BJ (cell line): ENCODE measurements at regions of chr6 and their contacts with region 1.

Region 1: GRCh38 chr6:116531675-116532570 is 13.6 kb downstream of the TRAPPC3L start:
- DNase-seq: no peak
- H3K4me3 ChIP-seq: no peak overlapping the region
- H3K27me3 ChIP-seq: no peaks in the 10 kb centered on the region
- CTCF ChIP-seq: peak; percentile 76

Region 2: GRCh38 chr6:116279260-116280063 is 252.5 kb before region 1 on chr6 and contains the start of gene TSPYL1:
- CTCF ChIA-PET with region 1: interaction called, 19 read pairs
- POLR2A ChIA-PET with region 1: no interaction called
- DNase-seq: peak; percentile 85
- H3K4me3 ChIP-seq: peak within 1 kb of the TSS; percentile 86
- H3K27me3 ChIP-seq: no peaks in the 10 kb centered on the region
- CTCF ChIP-seq: peak; percentile 20; the same call in 1 of the 2 replicates
- polyA plus RNA-seq, gene TSPYL1: 31.9 and 43.1 TPM in 2 replicates